ENCODE measurements at regions of chr19 and their contacts with region 1.

Region 1: GRCh38 chr19:35931161-35931873 is 4.9 kb upstream of the LRFN3 start:
- DNase-seq: peak; percentile 100
- H3K4me3 ChIP-seq: peak overlapping the region in 1 of 4 donors; percentile 18
- H3K27ac ChIP-seq: peak overlapping the region; percentile 71 to 79 (median 76)
- H3K4me1 ChIP-seq: peaks cover 0 to 19% (median 13%) of the 10 kb centered on the region in 4 donors
- H3K27me3 ChIP-seq: no peaks in the 10 kb centered on the region
- CTCF ChIP-seq: peak; percentile 81 to 97 (median 92)
- EP300 ChIP-seq: peak in 1 of 4 donors; percentile 80
- POLR2A ChIP-seq: peak; percentile 71 to 84

Region 2: GRCh38 chr19:35716801-35717666 is 214.3 kb before region 1 on chr19:
- intact Hi-C with region 1: loop called (anchors 1 kb)
- DNase-seq: peak; percentile 98
- H3K4me3 ChIP-seq: peak overlapping the region; percentile 76 to 99 (median 90)
- H3K27ac ChIP-seq: peak overlapping the region; percentile 90 to 97 (median 93)
- H3K4me1 ChIP-seq: peaks cover 0 to 33% (median 28%) of the 10 kb centered on the region in 4 donors
- H3K27me3 ChIP-seq: no peaks in the 10 kb centered on the region
- CTCF ChIP-seq: peak; percentile 92 to 97 (median 96)
- EP300 ChIP-seq: no peak
- POLR2A ChIP-seq: no peak

Region 3: GRCh38 chr19:35757749-35758608 is 173.3 kb before region 1 on chr19 and contains the start of gene PROSER3:
- intact Hi-C with region 1: loop called (anchors 5 kb)
- DNase-seq: peak; percentile 100
- H3K4me3 ChIP-seq: peak within 1 kb of the TSS; percentile 79 to 86 (median 83)
- H3K27ac ChIP-seq: peak within 1 kb of the TSS; percentile 98 to 99 (median 99)
- H3K4me1 ChIP-seq: peaks cover 0 to 63% (median 49%) of the 10 kb centered on the region in 4 donors
- H3K27me3 ChIP-seq: no peaks in the 10 kb centered on the region
- CTCF ChIP-seq: no peak
- EP300 ChIP-seq: no peak
- POLR2A ChIP-seq: peak; percentile 72 to 83
- total RNA-seq, gene PROSER3: 2.9 to 6.1 (median 5.2) TPM

Region 4: GRCh38 chr19:35882114-35882832 is 49.0 kb before region 1 on chr19:
- intact Hi-C with region 1: loop called (anchors 2 kb)
- DNase-seq: no peak
- H3K4me3 ChIP-seq: no peak overlapping the region
- H3K27ac ChIP-seq: no peak overlapping the region
- H3K4me1 ChIP-seq: peaks cover 0 to 6% (median 2%) of the 10 kb centered on the region in 4 donors
- H3K27me3 ChIP-seq: peaks cover 0 to 20% (median 3%) of the 10 kb centered on the region in 3 donors
- CTCF ChIP-seq: peak; percentile 26 to 49 (median 35)
- EP300 ChIP-seq: no peak
- POLR2A ChIP-seq: no peak

Region 5: DNA sequence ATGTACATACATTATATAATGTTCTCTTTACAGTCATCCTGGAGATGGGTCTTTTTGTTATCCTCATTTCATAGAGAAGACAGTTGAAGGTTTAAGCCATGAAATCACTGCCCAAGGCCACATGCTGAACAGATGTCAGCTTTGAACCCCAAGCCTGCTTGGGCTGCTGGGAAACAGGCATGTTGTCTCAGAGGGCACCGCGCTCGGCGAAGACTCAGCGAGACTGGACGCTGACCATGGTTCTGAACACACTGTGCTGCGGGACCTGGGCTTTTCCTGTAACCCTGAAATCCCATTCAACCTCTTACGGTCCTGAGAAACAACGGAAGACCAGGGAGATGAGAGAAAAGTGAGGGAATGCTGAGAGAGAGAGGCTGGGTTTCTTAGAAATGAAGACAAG is 32.2 kb after region 1 on chr19:
- intact Hi-C with region 1: no loop called
- DNase-seq: no peak
- H3K4me3 ChIP-seq: no peak overlapping the region
- H3K27ac ChIP-seq: no peak overlapping the region
- H3K4me1 ChIP-seq: peaks cover 0 to 11% (median 6%) of the 10 kb centered on the region in 4 donors
- H3K27me3 ChIP-seq: peaks cover 25 to 57% (median 34%) of the 10 kb centered on the region in 3 donors
- CTCF ChIP-seq: no peak
- EP300 ChIP-seq: no peak
- POLR2A ChIP-seq: no peak

Region 6: DNA sequence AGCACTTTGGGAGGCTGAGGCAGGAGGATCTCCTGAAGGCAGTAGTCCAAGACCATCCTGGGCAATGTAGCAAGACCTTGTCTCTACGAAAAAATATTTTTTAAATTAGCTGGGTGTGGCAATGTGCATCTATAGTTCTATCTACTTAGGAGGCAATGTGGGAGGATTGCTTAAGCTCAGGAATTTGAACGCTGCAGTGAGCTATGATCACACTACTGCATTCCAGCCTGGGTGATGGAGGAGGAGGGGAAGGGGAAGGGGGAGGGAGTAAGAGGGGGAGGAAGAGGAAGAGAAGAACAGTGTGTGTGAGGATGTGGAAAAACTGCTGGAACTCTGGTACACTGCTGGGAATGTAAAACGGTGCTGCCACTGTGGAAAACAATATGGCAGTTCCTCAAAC is 110.5 kb after region 1 on chr19:
- intact Hi-C with region 1: no loop called
- DNase-seq: no peak
- H3K4me3 ChIP-seq: no peak overlapping the region
- H3K27ac ChIP-seq: peak overlapping the region; percentile 71 to 76 (median 76)
- H3K4me1 ChIP-seq: peaks cover 0 to 61% (median 58%) of the 10 kb centered on the region in 4 donors
- H3K27me3 ChIP-seq: no peaks in the 10 kb centered on the region
- CTCF ChIP-seq: no peak
- EP300 ChIP-seq: no peak
- POLR2A ChIP-seq: no peak

Region 7: DNA sequence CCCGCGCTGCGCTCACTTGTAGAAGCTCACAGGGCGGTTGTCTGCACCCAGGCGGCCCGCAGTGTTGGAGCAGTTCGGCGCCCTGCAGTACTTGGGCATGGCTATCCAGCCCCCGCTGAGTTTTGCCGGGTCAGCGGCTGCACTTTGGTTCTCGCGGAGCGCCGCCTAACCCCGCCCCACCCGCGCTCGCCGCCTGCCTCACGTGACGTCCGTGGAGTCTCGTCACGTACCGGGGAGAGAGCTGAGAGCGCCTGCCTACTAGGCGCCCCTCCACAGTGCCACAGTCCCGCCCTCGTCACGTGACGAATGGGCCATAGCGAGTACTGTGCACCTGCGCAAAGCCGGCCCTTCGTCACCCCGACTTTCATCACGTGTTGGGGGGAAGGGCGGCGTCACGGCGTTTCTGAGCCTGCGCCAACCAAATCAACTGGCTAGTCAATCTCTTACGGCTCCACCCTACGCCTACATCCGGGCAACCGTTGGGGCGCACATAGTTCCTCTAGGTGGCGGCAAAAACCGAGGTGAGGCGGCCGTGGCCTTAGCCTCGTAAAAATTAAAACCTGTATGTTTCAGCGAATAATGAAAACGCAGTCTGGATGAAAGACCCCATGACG is 122.9 kb after region 1 on chr19 and contains the start of gene THAP8:
- intact Hi-C with region 1: loop called (anchors 2 kb)
- DNase-seq: peak; percentile 100
- H3K4me3 ChIP-seq: peak within 1 kb of the TSS; percentile 52 to 69 (median 64)
- H3K27ac ChIP-seq: peak within 1 kb of the TSS; percentile 90 to 95 (median 93)
- H3K4me1 ChIP-seq: peaks cover 0 to 18% (median 17%) of the 10 kb centered on the region in 4 donors
- H3K27me3 ChIP-seq: no peaks in the 10 kb centered on the region
- CTCF ChIP-seq: peak; percentile 45 to 66 (median 54)
- EP300 ChIP-seq: peak in 2 of 4 donors; percentile 40 to 98
- POLR2A ChIP-seq: peak; percentile 60 to 83
- total RNA-seq, gene THAP8: 12.6 to 23.9 (median 18.9) TPM

Region 8: DNA sequence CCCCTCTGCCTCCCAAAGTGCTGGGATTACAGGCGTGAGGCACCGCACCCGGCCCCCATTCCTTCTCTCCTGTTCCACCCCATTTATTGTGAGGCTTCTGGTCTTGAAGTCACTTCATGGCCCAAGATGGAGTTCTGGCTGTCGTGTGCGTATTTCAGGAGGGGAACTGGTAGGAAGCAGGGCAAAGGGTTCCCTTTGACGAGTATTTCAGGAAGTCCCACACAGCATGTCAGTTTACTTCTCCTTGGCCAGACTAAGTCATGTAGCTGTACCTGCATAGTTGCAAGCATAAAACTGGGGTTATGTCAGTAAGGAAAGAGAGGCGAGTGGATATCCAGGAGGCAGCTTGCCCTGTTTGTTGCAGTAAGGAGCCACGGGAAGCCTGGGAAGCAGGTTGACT is 133.5 kb after region 1 on chr19:
- intact Hi-C with region 1: no loop called
- DNase-seq: no peak
- H3K4me3 ChIP-seq: no peak overlapping the region
- H3K27ac ChIP-seq: no peak overlapping the region
- H3K4me1 ChIP-seq: no peaks in the 10 kb centered on the region
- H3K27me3 ChIP-seq: no peaks in the 10 kb centered on the region
- CTCF ChIP-seq: no peak
- EP300 ChIP-seq: no peak
- POLR2A ChIP-seq: no peak

Measured in sigmoid colon (tissue), 7 donors.